ENCODE measurements at regions of chr17 and their contacts with region 1.

Region 1: DNA sequence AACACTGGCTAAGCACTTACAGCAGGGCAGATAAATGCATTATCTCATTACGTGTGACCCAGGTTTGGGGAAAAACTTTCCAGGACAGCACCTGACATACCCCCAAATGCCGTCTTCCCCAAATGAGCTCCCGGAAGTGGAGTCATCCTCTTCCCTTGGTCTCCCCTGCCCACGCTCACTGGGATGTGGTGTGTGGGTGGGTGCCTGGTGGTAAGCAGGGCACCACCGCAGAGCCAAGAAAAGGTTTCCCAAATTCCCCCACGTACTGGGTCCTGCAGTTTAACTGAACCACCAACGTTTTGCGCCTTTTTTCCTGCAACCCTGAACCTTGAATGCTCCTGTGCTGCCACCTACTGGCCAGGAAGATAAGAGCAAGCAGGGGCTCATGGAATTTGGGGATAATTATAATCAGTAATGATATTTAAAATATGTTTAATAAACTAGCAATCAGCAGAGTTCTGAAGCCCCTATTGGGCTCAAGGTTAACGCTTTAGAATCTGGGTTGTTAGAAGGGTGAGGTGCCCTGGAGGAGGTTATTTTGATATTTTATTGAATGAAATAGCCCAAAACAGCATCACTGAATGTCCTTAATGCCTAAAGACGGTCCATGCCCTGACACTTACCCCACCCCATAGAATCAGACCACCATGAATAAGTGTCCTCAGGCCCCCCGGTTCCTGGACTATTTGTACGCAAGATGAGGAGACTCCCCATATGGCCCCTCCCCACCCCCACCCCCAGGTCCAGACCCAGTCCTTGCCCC is 8.0 kb downstream of the SPPL2C start:
- DNase-seq: peak; percentile 76
- ATAC-seq: peak; percentile 65
- H3K4me3 Mint-ChIP-seq: no peak overlapping the region
- H3K27ac Mint-ChIP-seq: no peak overlapping the region
- H3K4me1 Mint-ChIP-seq: no peaks in the 10 kb centered on the region
- H3K27me3 Mint-ChIP-seq: peaks cover 5% of the 10 kb centered on the region
- CTCF ChIP-seq: peak; percentile 89

Region 2: DNA sequence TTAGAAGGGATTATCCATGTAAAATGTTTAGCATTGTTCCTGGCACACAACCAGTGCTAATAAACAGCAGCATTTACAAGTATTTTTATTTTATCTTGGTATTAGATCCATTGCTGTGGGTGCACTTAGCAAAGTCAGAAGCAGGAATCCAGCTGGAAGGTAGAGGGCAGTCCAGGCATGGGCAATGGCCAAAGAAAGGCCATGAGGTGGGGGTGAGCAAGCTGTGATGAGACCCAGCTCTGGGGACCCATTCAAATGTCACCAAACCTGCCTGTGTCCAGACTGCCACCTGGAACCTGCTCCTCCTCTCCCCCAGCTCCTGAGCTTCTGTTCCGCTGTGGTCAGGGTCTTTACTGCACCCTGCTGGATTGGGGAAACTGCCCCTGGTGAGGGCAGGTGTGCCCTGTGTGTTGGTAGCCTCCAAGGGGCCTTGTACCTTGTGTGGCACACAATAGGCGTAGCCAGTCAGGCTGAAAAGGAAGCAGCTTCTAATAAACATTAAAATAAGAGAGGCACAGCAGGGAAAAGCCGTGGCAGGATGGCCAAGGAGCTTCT is 186.6 kb before region 1 on chr17:
- CTCF ChIA-PET with region 1: interaction called, 18 read pairs
- POLR2A ChIA-PET with region 1: no interaction called
- DNase-seq: peak; percentile 26
- ATAC-seq: peak; percentile 50
- H3K4me3 Mint-ChIP-seq: no peak overlapping the region
- H3K27ac Mint-ChIP-seq: no peak overlapping the region
- H3K4me1 Mint-ChIP-seq: no peaks in the 10 kb centered on the region
- H3K27me3 Mint-ChIP-seq: no peaks in the 10 kb centered on the region; the same call in 1 of the 2 replicates
- CTCF ChIP-seq: no peak

Region 3: DNA sequence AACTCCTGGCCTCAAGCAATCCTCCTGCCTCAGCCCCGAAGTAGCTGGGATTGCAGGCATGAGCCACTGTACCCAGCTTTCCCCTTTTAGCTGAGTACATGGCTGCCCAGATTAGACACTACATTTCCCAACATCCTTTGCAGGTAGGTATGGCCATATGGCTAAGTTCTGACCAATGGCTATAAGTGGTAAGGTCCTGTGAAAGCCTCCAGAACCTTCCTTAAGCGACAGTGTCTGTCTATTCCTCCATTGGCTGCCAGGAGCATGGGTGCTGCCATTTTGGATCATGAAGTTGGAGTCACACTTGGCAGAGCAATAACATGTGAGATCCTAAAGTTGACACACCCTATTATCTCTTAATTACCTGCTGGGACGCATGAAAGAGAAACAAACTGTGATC is 93.0 kb before region 1 on chr17:
- CTCF ChIA-PET with region 1: no interaction called
- POLR2A ChIA-PET with region 1: no interaction called
- DNase-seq: no peak
- ATAC-seq: peak; percentile 91
- H3K4me3 Mint-ChIP-seq: no peak overlapping the region
- H3K27ac Mint-ChIP-seq: no peak overlapping the region
- H3K4me1 Mint-ChIP-seq: peaks cover 5% of the 10 kb centered on the region; the same call in 1 of the 2 replicates
- H3K27me3 Mint-ChIP-seq: peaks cover 17% of the 10 kb centered on the region
- CTCF ChIP-seq: no peak

Region 4: GRCh38 chr17:45833920-45834319 is 18.8 kb before region 1 on chr17:
- CTCF ChIA-PET with region 1: interaction called, 19 read pairs
- POLR2A ChIA-PET with region 1: no interaction called
- DNase-seq: no peak
- ATAC-seq: no peak
- H3K4me3 Mint-ChIP-seq: no peak overlapping the region
- H3K27ac Mint-ChIP-seq: no peak overlapping the region
- H3K4me1 Mint-ChIP-seq: 0 out of 2 replicates have a peak, but pooled peaks cover 5% of the 10 kb centered on the region
- H3K27me3 Mint-ChIP-seq: no peaks in the 10 kb centered on the region
- CTCF ChIP-seq: no peak

Region 5: DNA sequence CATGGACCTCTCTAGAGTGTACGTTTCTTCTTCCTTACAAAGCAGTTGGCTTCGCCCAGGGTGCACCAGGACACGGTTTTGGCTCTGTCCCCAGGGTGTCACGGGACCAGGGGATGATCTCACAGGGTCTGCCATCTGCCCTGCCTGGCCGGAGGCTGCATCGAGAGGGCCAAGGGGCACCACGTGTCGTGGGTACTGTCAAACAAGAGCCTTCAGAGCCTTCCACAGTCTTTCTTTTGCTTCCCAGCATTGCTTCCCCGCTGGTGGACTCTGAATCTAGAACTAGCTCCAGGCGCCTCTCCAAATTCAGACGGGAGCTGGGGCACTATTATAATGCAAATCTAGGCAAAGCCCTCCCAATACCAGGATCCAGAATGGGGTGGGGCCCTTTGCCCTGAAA is 89.6 kb after region 1 on chr17:
- CTCF ChIA-PET with region 1: no interaction called
- POLR2A ChIA-PET with region 1: no interaction called
- DNase-seq: no peak
- ATAC-seq: peak; percentile 82
- H3K4me3 Mint-ChIP-seq: peak overlapping the region; percentile 34
- H3K27ac Mint-ChIP-seq: no peak overlapping the region
- H3K4me1 Mint-ChIP-seq: peaks cover 42% of the 10 kb centered on the region
- H3K27me3 Mint-ChIP-seq: peaks cover 5% of the 10 kb centered on the region
- CTCF ChIP-seq: no peak

Measured in WTC11 (cell line).